ENCODE measurements at regions of chr2 and their contacts with region 1.

Region 1: GRCh38 chr2:61694312-61695274 is 156.4 kb upstream of the XPO1 start:
- DNase-seq: peak; percentile 74 to 82 (median 77)
- H3K4me3 ChIP-seq: peak overlapping the region; percentile 43 to 83
- H3K4me3 Mint-ChIP-seq: peak overlapping the region; percentile 89 to 95 (median 93)
- H3K27ac ChIP-seq: peak overlapping the region; percentile 46
- H3K27ac Mint-ChIP-seq: peak overlapping the region; percentile 74 to 96 (median 89)
- H3K4me1 ChIP-seq: peaks cover 15% of the 10 kb centered on the region
- H3K4me1 Mint-ChIP-seq: peaks cover 6 to 16% (median 12%) of the 10 kb centered on the region in 4 donors
- H3K27me3 ChIP-seq: no peaks in the 10 kb centered on the region
- H3K27me3 Mint-ChIP-seq: no peaks in the 10 kb centered on the region

Region 2: GRCh38 chr2:61470965-61471904 is 223.4 kb before region 1 on chr2 and contains the start of gene USP34:
- CTCF ChIA-PET with region 1: no interaction called
- POLR2A ChIA-PET with region 1: no interaction called
- intact Hi-C with region 1: loop called (anchors 2 kb)
- DNase-seq: peak; percentile 89 to 95 (median 92)
- H3K4me3 ChIP-seq: peak within 1 kb of the TSS; percentile 68 to 89
- H3K4me3 Mint-ChIP-seq: peak within 1 kb of the TSS; percentile 92 to 98 (median 95)
- H3K27ac ChIP-seq: peak within 1 kb of the TSS; percentile 98
- H3K27ac Mint-ChIP-seq: peak within 1 kb of the TSS; percentile 93 to 100 (median 99)
- H3K4me1 ChIP-seq: peaks cover 41% of the 10 kb centered on the region
- H3K4me1 Mint-ChIP-seq: peaks cover 12 to 46% (median 29%) of the 10 kb centered on the region in 4 donors
- H3K27me3 ChIP-seq: no peaks in the 10 kb centered on the region
- H3K27me3 Mint-ChIP-seq: no peaks in the 10 kb centered on the region
- total RNA-seq, gene USP34: 163 to 164 TPM

Region 3: DNA sequence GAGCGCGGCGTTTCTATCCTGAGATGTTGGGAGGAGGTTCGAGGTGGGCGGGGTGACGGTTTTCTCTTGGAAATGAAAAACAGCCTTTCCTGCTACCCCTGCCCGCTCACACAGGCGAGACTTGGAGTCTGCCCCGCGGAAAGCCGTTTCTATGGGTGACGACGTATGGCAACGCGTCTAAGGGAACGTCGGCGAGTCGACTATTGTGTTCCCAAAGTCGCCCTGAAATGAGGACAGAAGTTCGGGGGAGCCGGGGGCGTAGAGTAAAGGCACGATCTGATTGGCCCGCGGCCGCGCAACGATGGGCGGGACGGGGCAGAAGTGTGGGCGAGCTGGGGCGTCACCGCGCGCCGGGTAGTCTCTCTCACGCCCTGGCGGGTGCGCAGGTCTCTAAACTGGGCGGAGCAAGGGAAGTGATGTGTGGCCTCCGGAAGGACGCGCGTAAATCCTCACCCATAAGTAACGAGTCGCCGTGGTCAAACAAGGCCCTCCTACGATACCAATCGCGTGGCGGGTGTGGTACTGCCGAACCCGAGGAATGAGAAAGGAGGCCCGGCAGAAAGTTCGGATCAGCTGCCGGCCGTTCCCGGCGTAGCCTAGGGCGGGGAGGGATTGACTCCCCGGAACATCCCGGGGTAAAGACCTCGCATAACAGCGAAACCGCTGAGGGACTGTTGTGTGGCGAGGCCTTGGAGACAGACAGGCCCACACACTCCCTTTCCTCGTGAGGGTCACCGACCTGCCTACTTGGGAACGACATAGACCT is 69.6 kb after region 1 on chr2:
- CTCF ChIA-PET with region 1: no interaction called
- POLR2A ChIA-PET with region 1: no interaction called
- intact Hi-C with region 1: loop called (anchors 1 kb)
- DNase-seq: peak; percentile 95 to 98 (median 96)
- H3K4me3 ChIP-seq: peak overlapping the region; percentile 78 to 83
- H3K4me3 Mint-ChIP-seq: peak overlapping the region; percentile 93 to 98 (median 96)
- H3K27ac ChIP-seq: peak overlapping the region; percentile 94
- H3K27ac Mint-ChIP-seq: peak overlapping the region; percentile 95 to 99 (median 99)
- H3K4me1 ChIP-seq: peaks cover 15% of the 10 kb centered on the region
- H3K4me1 Mint-ChIP-seq: peaks cover 8 to 22% (median 15%) of the 10 kb centered on the region in 4 donors
- H3K27me3 ChIP-seq: no peaks in the 10 kb centered on the region
- H3K27me3 Mint-ChIP-seq: peaks cover 0 to 2% of the 10 kb centered on the region in 2 donors

Region 4: DNA sequence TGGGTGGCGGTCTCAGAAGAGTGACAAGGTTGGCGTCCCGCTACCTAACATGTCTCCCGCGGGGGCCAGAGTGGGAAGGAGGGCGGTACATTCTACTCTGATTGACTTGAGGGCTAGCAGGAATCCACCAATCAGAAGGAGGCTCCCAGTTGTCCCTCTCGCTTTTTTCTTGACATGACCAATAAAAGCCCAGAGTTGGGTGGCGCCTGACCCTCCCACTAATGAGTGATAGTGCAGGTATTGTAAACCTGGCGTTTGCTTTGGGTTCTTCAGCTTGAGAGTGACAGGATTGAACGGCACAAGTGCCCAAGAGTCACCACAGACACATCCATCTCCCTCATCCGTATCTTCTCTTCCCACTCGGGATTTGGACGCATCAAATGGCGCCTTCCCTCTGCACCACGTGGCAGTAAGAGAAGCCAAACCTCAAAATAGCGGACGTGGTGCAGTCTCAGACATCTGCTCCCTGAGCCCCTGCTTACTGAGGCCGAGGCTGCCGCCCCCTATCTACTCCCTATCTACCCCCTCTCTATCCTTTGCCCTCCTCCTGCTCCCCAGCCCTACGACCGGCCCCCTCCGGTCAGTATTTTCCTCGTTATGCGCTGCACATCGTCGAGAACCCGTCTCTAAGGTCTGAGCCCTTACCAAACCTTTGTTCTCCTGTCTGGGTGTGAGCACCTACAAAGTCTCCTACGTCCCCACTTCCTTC is 160.0 kb after region 1 on chr2:
- CTCF ChIA-PET with region 1: no interaction called
- POLR2A ChIA-PET with region 1: no interaction called
- intact Hi-C with region 1: loop called (anchors 1 kb)
- DNase-seq: peak; percentile 92 to 98 (median 94)
- H3K4me3 ChIP-seq: peak overlapping the region; percentile 85 to 95
- H3K4me3 Mint-ChIP-seq: peak overlapping the region; percentile 94 to 99 (median 96)
- H3K27ac ChIP-seq: peak overlapping the region; percentile 69
- H3K27ac Mint-ChIP-seq: peak overlapping the region; percentile 87 to 98 (median 95)
- H3K4me1 ChIP-seq: peaks cover 16% of the 10 kb centered on the region
- H3K4me1 Mint-ChIP-seq: peaks cover 7 to 25% (median 16%) of the 10 kb centered on the region in 4 donors
- H3K27me3 ChIP-seq: no peaks in the 10 kb centered on the region
- H3K27me3 Mint-ChIP-seq: no peaks in the 10 kb centered on the region

Region 5: GRCh38 chr2:62705007-62705829 is 1010.6 kb after region 1 on chr2 and contains the start of gene EHBP1:
- CTCF ChIA-PET with region 1: no interaction called
- POLR2A ChIA-PET with region 1: no interaction called
- intact Hi-C with region 1: loop called (anchors 10 kb)
- DNase-seq: peak; percentile 97 to 99 (median 97)
- H3K4me3 ChIP-seq: peak within 1 kb of the TSS; percentile 80 to 94
- H3K4me3 Mint-ChIP-seq: peak within 1 kb of the TSS; percentile 86 to 96 (median 94)
- H3K27ac ChIP-seq: peak within 1 kb of the TSS; percentile 50
- H3K27ac Mint-ChIP-seq: peak within 1 kb of the TSS; percentile 86 to 97 (median 91)
- H3K4me1 ChIP-seq: peaks cover 43% of the 10 kb centered on the region
- H3K4me1 Mint-ChIP-seq: peaks cover 28 to 39% (median 31%) of the 10 kb centered on the region in 4 donors
- H3K27me3 ChIP-seq: no peaks in the 10 kb centered on the region
- H3K27me3 Mint-ChIP-seq: no peaks in the 10 kb centered on the region
- total RNA-seq, gene EHBP1: 26.8 to 31.9 TPM

Measured in CD4-positive, alpha-beta memory T cell (primary cell).